ENCODE measurements at regions of chr10 and their contacts with region 1.

Region 1: DNA sequence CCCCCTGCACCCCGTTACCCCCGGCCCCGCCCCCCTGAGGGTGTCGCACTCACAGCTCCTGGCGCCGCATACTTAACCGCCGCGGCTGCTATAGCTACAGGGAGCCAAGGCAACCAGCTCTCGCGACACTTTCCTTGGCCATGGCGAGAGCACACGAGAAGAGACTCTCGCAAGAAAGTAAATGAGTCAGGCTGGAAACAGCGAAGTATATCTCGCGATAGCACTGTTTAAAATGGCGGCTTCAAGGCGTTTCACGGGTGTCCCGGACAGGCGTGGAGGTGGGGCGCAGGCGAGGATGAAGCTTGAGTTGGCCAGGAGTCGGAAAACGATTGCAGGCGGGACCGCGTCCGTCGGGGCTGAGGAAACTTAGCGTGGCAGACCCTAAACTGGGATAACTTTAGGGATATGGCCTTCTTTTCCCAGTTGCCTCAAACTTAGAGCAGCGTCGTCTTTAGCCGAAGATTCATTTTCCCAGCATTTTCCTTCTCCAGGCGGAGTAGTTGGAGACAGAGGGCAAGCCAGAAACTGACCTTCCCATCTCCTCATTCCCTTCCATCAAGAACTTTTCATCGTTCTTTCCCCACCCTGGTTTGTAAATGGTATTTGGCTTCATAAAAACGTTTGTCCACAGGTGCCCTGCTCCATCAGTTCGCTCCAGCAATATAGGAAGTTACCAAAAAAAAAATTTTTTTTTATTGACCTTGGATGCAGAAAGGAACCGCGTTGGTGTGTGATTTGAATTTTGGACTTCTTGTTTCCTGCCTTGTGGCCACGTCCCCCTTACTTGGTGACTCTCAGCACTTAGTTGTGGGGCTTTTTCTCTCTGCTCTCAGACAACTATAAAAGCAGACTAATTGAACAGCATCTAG is 15.2 kb downstream of the MYOZ1 start:
- DNase-seq: peak; percentile 78
- ATAC-seq: peak; percentile 94
- H3K4me3 Mint-ChIP-seq: peak overlapping the region; percentile 99
- H3K27ac Mint-ChIP-seq: peak overlapping the region; percentile 98
- H3K4me1 Mint-ChIP-seq: peaks cover 24% of the 10 kb centered on the region
- H3K27me3 Mint-ChIP-seq: no peaks in the 10 kb centered on the region
- CTCF ChIP-seq: no peak

Region 2: GRCh38 chr10:73252445-73253224 is 373.5 kb before region 1 on chr10 and contains the start of gene MRPS16:
- CTCF ChIA-PET with region 1: no interaction called
- POLR2A ChIA-PET with region 1: interaction called, 6 read pairs
- intact Hi-C with region 1: loop called (anchors 1 kb)
- DNase-seq: peak; percentile 84
- ATAC-seq: peak; percentile 89
- H3K4me3 Mint-ChIP-seq: peak within 1 kb of the TSS; percentile 99
- H3K27ac Mint-ChIP-seq: peak within 1 kb of the TSS; percentile 95
- H3K4me1 Mint-ChIP-seq: peaks cover 44% of the 10 kb centered on the region
- H3K27me3 Mint-ChIP-seq: no peaks in the 10 kb centered on the region
- CTCF ChIP-seq: no peak
- total RNA-seq, gene MRPS16: 85.9 and 88.5 TPM in 2 replicates

Region 3: DNA sequence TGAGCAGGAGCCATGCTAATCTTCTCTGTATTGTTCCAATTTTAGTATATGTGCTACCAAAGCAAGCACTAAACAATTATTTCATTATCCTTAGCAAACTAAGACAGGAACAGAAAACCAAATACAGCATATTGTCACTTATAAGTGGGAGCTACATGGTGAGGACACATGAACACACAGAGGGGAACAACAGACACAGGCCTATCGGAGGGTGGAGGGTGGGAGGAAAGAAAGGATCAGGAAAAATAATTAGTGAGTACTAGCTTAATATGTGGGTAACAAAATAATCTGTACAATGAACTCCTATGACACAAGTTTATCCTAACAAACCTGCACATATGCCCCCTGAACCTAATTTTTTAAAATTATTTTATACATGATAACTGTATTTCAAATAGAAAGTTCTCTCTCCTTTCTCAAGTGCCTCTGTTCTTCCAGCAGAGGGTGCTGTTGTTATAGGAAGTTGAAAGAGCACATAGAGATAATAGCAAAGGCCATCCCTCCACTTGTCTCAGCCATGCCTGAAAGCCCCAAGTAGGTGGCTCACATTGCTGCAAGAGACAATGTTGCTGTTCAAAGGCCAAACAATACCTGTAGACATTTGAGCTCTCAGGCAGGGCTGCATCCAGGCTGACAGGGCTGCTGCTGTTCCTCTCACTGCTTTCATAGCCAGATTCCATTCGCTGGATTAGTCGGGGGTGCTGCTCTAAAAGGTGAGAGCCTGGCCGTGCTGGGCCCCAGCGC is 96.9 kb before region 1 on chr10:
- CTCF ChIA-PET with region 1: no interaction called
- POLR2A ChIA-PET with region 1: no interaction called
- intact Hi-C with region 1: loop called (anchors 1 kb)
- DNase-seq: peak; percentile 20
- ATAC-seq: peak; percentile 86
- H3K4me3 Mint-ChIP-seq: no peak overlapping the region
- H3K27ac Mint-ChIP-seq: no peak overlapping the region
- H3K4me1 Mint-ChIP-seq: no peaks in the 10 kb centered on the region
- H3K27me3 Mint-ChIP-seq: no peaks in the 10 kb centered on the region
- CTCF ChIP-seq: peak; percentile 68

Region 4: DNA sequence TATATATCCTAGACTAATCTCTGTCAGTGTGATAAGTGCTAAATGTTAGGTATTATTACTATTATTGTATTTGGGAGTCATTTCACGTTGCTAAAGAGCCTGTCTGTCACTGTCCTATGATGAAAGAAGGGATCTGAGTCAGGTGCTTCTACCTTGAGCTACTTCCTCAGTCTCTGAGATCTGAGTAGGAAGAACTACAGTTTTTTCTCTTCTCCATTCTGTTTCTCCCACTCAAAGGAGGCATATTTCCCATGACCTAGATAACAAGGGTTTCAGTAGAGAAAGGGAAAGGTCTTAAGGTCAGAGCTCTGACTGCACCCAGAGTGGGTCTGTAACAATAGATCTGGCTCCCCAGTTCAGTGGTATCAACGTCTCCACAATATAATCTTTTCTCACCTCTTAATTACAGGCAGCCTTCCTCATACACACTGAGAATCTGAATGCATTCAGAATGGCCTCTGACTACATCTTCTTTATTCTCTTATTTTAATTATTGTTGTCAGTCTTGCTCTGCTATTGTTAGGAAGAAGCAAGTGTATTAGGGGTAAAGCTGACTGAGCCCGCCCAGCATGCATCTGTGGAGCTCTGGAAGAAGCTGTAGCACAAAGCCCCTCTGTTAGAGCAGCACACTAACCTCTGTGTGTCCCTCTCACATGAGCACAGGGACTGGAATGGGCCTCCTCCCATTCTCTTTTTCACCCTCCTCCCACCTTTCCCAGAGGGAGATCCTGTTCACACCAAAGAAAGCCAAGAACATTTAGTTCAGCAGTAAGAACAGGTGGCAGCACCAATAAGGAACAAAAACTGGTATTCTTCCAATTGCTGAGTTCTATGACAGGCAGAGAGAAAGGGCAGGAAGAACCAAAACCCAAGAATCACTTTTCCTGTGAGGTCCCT is 73.1 kb before region 1 on chr10:
- CTCF ChIA-PET with region 1: no interaction called
- POLR2A ChIA-PET with region 1: no interaction called
- intact Hi-C with region 1: no loop called
- DNase-seq: no peak
- ATAC-seq: no peak
- H3K4me3 Mint-ChIP-seq: no peak overlapping the region
- H3K27ac Mint-ChIP-seq: no peak overlapping the region
- H3K4me1 Mint-ChIP-seq: no peaks in the 10 kb centered on the region
- H3K27me3 Mint-ChIP-seq: no peaks in the 10 kb centered on the region
- CTCF ChIP-seq: no peak

Region 5: GRCh38 chr10:73730153-73730906 is 104.2 kb after region 1 on chr10:
- CTCF ChIA-PET with region 1: no interaction called
- POLR2A ChIA-PET with region 1: interaction called, 10 read pairs
- intact Hi-C with region 1: no loop called
- DNase-seq: peak; percentile 89
- ATAC-seq: peak; percentile 93
- H3K4me3 Mint-ChIP-seq: peak overlapping the region; percentile 99
- H3K27ac Mint-ChIP-seq: peak overlapping the region; percentile 96
- H3K4me1 Mint-ChIP-seq: peaks cover 22% of the 10 kb centered on the region
- H3K27me3 Mint-ChIP-seq: no peaks in the 10 kb centered on the region
- CTCF ChIP-seq: no peak

Region 6: DNA sequence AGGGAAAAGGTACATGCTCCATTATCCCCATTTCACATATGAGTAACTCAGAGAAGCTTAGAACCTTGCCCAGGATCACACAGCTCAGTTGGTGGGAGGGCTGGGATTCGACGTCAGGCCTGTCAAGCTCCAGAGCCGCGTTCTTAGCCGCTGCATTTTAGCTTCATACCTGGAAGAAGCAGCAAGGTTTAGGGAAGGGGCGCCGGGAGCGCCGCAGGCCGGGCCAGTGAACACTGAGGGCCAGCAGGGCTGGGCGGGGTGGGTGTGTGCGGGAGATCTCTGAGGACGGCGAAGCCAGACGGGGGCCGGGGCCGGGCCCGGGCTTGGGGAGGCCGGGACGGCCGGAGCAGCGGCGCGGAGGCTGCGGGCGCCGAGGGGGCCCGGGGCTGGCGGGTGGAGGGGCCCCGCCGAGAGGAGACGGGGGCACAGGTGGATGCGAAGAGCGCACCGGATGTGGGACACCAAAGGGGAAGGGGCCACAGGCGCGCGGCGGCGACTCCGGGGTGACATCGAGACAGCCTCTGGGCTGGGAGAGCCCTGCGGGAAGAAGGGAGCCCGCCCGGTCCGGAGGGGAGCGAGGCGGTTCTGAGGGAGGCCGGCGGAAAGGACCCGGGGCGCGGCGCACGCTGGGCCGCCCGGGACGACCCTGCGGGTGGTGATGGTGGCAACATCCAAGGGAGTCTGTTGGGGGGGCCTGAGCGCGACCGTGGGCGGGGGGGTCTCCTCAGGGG is 184.8 kb after region 1 on chr10:
- CTCF ChIA-PET with region 1: no interaction called
- POLR2A ChIA-PET with region 1: no interaction called
- intact Hi-C with region 1: loop called (anchors 10 kb)
- DNase-seq: no peak
- ATAC-seq: peak; percentile 9
- H3K4me3 Mint-ChIP-seq: peak overlapping the region; percentile 87
- H3K27ac Mint-ChIP-seq: peak overlapping the region; percentile 83
- H3K4me1 Mint-ChIP-seq: peaks cover 31% of the 10 kb centered on the region
- H3K27me3 Mint-ChIP-seq: no peaks in the 10 kb centered on the region
- CTCF ChIP-seq: no peak